ENCODE measurements at regions of chr6 and their contacts with region 1.

Region 1: GRCh38 chr6:154835307-154835706 is 102.1 kb downstream of the SCAF8 start:
- DNase-seq: no peak
- ATAC-seq: no peak
- H3K4me3 ChIP-seq: no peak overlapping the region
- H3K4me3 Mint-ChIP-seq: no peak overlapping the region
- H3K27ac ChIP-seq: no peak overlapping the region
- H3K27ac Mint-ChIP-seq: peak overlapping the region in 2 of 9 donors; percentile 24 to 65
- H3K4me1 ChIP-seq: no peaks in the 10 kb centered on the region
- H3K4me1 Mint-ChIP-seq: peaks cover 7 to 50% (median 30%) of the 10 kb centered on the region in 7 donors
- H3K27me3 ChIP-seq: no peaks in the 10 kb centered on the region
- H3K27me3 Mint-ChIP-seq: no peaks in the 10 kb centered on the region

Region 2: GRCh38 chr6:154705471-154706113 is 129.7 kb before region 1 on chr6:
- CTCF ChIA-PET with region 1: no interaction called
- POLR2A ChIA-PET with region 1: no interaction called
- intact Hi-C with region 1: no loop called
- DNase-seq: peak in 3 of 9 donors; percentile 5 to 13 (median 7)
- ATAC-seq: no peak
- H3K4me3 ChIP-seq: no peak overlapping the region
- H3K4me3 Mint-ChIP-seq: no peak overlapping the region
- H3K27ac ChIP-seq: no peak overlapping the region
- H3K27ac Mint-ChIP-seq: no peak overlapping the region
- H3K4me1 ChIP-seq: no peaks in the 10 kb centered on the region
- H3K4me1 Mint-ChIP-seq: no peaks in the 10 kb centered on the region
- H3K27me3 ChIP-seq: no peaks in the 10 kb centered on the region
- H3K27me3 Mint-ChIP-seq: peaks cover 4 to 26% (median 13%) of the 10 kb centered on the region in 5 donors

Region 3: GRCh38 chr6:154814063-154814462 is 21.2 kb before region 1 on chr6:
- CTCF ChIA-PET with region 1: no interaction called
- POLR2A ChIA-PET with region 1: no interaction called
- intact Hi-C with region 1: loop called in 1 of 2 experiments (anchors 2 kb)
- DNase-seq: no peak
- ATAC-seq: no peak
- H3K4me3 ChIP-seq: no peak overlapping the region
- H3K4me3 Mint-ChIP-seq: no peak overlapping the region
- H3K27ac ChIP-seq: no peak overlapping the region
- H3K27ac Mint-ChIP-seq: peak overlapping the region in 1 of 9 donors; percentile 2
- H3K4me1 ChIP-seq: no peaks in the 10 kb centered on the region
- H3K4me1 Mint-ChIP-seq: peaks cover 0 to 19% (median 6%) of the 10 kb centered on the region in 7 donors
- H3K27me3 ChIP-seq: no peaks in the 10 kb centered on the region
- H3K27me3 Mint-ChIP-seq: no peaks in the 10 kb centered on the region

Region 4: GRCh38 chr6:154928325-154928922 is 93.1 kb after region 1 on chr6:
- CTCF ChIA-PET with region 1: no interaction called
- POLR2A ChIA-PET with region 1: no interaction called
- intact Hi-C with region 1: no loop called
- DNase-seq: peak in 8 of 9 donors; percentile 7 to 55 (median 43)
- ATAC-seq: peak; percentile 57
- H3K4me3 ChIP-seq: no peak overlapping the region
- H3K4me3 Mint-ChIP-seq: no peak overlapping the region
- H3K27ac ChIP-seq: no peak overlapping the region
- H3K27ac Mint-ChIP-seq: no peak overlapping the region
- H3K4me1 ChIP-seq: no peaks in the 10 kb centered on the region
- H3K4me1 Mint-ChIP-seq: peaks cover 0 to 17% (median 8%) of the 10 kb centered on the region in 7 donors
- H3K27me3 ChIP-seq: no peaks in the 10 kb centered on the region
- H3K27me3 Mint-ChIP-seq: no peaks in the 10 kb centered on the region

Measured in naive thymus-derived CD4-positive, alpha-beta T cell (primary cell).